ENCODE measurements at regions of chr22 and their contacts with region 1.

Region 1: DNA sequence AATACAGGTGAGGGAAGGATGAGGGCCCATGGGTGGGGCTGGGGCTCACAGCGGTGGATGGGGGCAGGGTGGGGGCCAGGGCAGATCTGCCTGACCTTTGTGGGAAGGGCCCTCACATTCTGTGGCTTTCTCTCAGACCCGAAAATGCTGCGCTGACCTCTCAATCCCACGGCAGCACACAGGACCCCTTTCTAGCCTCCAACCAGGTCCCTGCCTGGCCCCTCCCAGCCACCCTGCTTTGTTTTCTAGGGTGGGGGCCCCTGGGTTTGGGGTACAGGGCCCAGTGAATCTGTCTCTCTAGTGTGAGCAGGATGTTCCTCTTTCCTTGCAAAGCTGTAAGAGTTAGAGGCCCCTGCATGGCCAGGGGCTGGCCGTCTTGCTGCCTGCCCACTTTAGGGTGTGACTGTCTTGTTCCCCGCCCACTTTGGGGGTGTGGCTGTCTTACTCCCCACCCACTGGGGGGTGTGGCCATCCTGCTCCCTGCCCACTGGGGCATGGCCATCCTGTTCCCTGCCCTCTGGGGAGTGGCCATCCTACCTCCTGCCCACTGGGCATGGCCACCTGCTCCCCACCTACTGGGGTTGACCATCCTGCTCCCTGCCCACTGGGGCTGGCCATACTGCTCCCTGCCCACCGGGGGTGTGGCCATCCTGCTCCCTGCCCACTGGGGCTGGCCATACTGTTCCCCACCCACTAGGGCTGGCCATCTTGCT is 11.5 kb downstream of the PARVG start:
- DNase-seq: no peak
- ATAC-seq: no peak
- H3K4me3 Mint-ChIP-seq: no peak overlapping the region
- H3K27ac Mint-ChIP-seq: no peak overlapping the region
- H3K4me1 Mint-ChIP-seq: peaks cover 59% of the 10 kb centered on the region
- H3K27me3 Mint-ChIP-seq: no peaks in the 10 kb centered on the region
- CTCF ChIP-seq: no peak

Region 2: DNA sequence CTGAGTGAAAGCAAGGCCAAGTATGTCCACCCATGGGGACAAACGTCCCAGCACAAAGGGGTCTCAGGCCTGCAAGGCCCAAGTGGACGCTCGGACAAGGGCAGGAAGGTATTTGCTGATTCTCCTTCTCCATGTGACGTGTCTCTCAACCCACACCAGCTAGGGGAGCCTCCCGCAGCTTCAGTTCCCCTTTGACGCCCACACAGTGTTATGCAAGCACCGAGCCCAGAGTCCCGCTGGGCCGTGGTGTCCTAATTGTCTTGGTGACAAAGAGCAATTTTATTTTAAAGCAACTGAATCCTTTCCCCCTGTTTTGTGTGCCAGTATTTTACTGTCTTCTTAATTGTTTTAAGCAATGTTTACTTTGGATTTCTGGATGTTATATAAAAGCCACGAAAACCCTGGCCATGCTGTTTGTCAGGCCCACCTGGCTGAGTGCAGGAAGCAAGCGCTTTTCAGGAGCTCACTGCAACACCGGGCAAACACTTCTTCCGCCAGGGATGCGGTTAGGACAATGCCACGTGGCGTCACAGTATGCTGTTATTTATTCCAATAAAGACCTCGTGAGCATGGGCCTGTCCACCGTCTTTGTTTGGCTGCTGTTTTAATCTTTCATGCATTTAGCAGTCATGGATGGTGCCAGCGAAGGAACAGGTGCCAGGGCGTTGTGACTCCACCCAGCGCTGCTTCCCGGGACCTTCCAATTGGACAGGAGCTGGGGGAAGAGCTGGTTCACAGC is 19.7 kb before region 1 on chr22:
- CTCF ChIA-PET with region 1: no interaction called
- POLR2A ChIA-PET with region 1: interaction called, 3 read pairs
- intact Hi-C with region 1: loop called (anchors 1 kb)
- DNase-seq: peak; percentile 50
- ATAC-seq: peak; percentile 98
- H3K4me3 Mint-ChIP-seq: peak overlapping the region; percentile 25
- H3K27ac Mint-ChIP-seq: peak overlapping the region; percentile 59
- H3K4me1 Mint-ChIP-seq: peaks cover 23% of the 10 kb centered on the region
- H3K27me3 Mint-ChIP-seq: no peaks in the 10 kb centered on the region
- CTCF ChIP-seq: no peak

Region 3: GRCh38 chr22:44204739-44205515 is 12.7 kb after region 1 on chr22:
- CTCF ChIA-PET with region 1: interaction called, 3 read pairs
- POLR2A ChIA-PET with region 1: interaction called, 11 read pairs
- intact Hi-C with region 1: no loop called
- DNase-seq: peak; percentile 37
- ATAC-seq: peak; percentile 94
- H3K4me3 Mint-ChIP-seq: peak overlapping the region; percentile 42
- H3K27ac Mint-ChIP-seq: peak overlapping the region; percentile 30
- H3K4me1 Mint-ChIP-seq: peaks cover 47% of the 10 kb centered on the region
- H3K27me3 Mint-ChIP-seq: no peaks in the 10 kb centered on the region
- CTCF ChIP-seq: no peak

Region 4: DNA sequence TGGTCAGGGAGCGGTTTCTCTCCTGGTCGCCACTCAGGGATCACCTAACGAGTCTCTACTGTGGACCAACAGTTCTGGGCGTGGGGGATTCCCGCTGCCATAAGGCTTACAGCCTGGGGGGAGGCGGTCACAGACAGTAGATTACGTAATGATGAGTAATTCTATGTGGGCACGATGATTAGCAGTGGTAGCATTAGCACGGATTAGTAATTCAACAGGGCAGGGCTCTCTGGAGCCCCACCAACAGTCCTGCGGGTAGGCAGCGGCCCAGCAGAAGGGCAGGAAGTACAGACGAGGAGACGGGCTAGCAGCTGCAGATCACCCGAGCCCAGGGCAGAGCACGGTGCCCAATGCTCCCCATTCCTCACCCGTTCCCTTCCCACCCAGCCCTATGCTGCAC is 116.9 kb after region 1 on chr22:
- CTCF ChIA-PET with region 1: no interaction called
- POLR2A ChIA-PET with region 1: no interaction called
- intact Hi-C with region 1: no loop called
- DNase-seq: no peak
- ATAC-seq: no peak
- H3K4me3 Mint-ChIP-seq: no peak overlapping the region
- H3K27ac Mint-ChIP-seq: no peak overlapping the region
- H3K4me1 Mint-ChIP-seq: no peaks in the 10 kb centered on the region
- H3K27me3 Mint-ChIP-seq: peaks cover 4% of the 10 kb centered on the region
- CTCF ChIP-seq: no peak